Ovary (tissue), 10 donors: ENCODE measurements at regions of chr17 and their contacts with region 1.

Region 1: GRCh38 chr17:40480501-40481003 is 20.9 kb downstream of the TNS4 start:
- DNase-seq: peak in 1 of 5 donors; percentile 36
- H3K4me3 ChIP-seq: no peak overlapping the region
- H3K27ac ChIP-seq: no peak overlapping the region
- H3K4me1 ChIP-seq: peaks cover 8% of the 10 kb centered on the region
- H3K27me3 ChIP-seq: no peaks in the 10 kb centered on the region
- CTCF ChIP-seq: no peak
- EP300 ChIP-seq: no peak
- POLR2A ChIP-seq: no peak

Region 2: DNA sequence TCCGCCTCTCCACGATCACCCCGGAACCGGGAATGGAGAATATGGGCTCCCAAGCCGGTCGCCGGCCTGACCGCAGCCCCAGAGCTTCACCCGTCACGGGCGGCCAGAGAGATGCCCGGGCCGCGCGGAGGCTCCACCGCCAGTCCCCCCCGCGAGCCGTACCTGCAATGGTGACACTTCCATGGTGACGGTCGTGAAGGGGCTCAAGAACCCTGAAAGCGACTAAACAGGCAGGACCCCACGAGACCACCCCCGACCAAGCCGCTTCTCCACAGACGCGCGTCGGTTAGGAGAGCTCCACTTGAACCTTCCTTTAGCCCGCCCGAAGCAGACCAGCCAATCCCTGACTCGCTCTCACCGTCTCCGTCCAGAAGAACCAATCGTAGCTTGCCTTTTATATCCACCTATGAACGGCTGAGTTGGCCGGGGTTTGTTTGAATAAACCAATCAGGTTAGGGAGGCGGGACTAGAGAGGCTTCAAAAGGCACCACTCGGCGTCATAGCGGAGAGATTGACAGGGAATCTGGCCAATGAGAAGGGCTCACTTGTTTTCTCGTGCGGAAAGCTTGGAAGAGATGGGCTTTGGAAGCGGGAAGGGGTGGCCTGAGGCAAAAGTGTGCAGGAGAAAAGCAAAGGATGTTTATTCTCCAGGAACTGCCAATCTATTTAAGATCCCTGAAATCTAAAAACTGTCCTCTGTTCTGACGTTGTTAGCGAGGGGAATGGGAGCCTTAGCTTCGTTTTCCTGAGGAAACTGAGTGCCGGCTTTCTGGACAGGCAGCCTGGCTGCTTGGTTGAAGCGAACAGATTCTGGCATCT is 62.7 kb before region 1 on chr17 and contains the start of gene TOP2A:
- intact Hi-C with region 1: no loop called
- DNase-seq: peak; percentile 96 to 99 (median 97)
- H3K4me3 ChIP-seq: peak within 1 kb of the TSS; percentile 54
- H3K27ac ChIP-seq: no peak within 1 kb of the TSS
- H3K4me1 ChIP-seq: peaks cover 6% of the 10 kb centered on the region
- H3K27me3 ChIP-seq: no peaks in the 10 kb centered on the region
- CTCF ChIP-seq: no peak
- EP300 ChIP-seq: no peak
- POLR2A ChIP-seq: no peak
- total RNA-seq, gene TOP2A: 0.36 to 4.5 (median 0.82) TPM

Region 3: DNA sequence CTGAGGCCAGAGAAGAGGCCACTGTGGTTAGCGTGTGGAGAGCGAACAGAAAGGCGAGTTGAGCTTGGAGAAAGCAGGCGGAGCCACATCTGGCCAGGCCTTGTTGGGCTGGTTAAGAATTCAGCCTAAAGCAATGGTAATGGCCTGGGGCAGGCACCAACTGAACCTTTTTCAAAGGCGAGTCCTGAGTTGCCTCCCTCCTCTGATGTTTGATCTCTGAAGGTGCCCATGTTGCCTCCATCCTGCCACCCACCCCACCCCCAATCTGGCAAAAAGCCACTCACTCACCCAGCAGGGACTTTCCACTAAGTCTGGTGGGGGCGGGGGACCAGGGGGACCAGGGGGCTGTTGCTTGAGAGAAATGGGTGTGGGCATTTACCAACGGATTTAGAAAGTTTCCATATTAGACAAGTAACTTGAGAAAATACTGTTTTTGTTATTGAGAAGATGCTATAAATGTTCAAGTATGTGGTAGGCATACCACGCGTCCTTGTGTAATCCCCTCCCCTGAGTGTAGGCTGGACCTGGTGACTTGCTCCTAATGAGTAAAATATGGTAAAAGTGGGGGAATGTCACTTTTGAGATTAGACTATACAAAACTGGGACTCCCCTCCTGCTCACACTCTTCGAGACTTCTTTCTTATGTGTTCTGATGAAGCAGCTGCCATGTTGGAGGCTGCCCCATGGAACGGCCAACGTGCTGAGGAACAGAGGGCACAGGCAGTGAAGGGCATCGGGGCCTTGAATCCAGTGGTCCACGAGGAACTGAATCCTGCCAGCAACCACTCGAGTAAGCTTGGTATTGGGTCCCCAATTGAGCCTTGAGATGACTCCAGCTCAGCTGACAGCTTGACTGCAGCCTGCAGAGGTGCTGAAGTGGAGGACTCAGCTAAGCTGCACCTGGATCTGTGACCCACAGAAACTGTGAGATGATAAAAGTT is 50.8 kb after region 1 on chr17:
- intact Hi-C with region 1: loop called in 3 of 4 experiments (anchors 2 to 10 kb)
- DNase-seq: peak in 3 of 5 donors; percentile 27 to 45 (median 38)
- H3K4me3 ChIP-seq: no peak overlapping the region
- H3K27ac ChIP-seq: no peak overlapping the region
- H3K4me1 ChIP-seq: peaks cover 13% of the 10 kb centered on the region
- H3K27me3 ChIP-seq: no peaks in the 10 kb centered on the region
- CTCF ChIP-seq: no peak
- EP300 ChIP-seq: no peak
- POLR2A ChIP-seq: no peak